PC-3 (cell line): ENCODE measurements at regions of chr6 and their contacts with region 1.

Region 1: GRCh38 chr6:1596088-1596852 is 13.4 kb upstream of the FOXC1 start:
- DNase-seq: peak; percentile 66
- ATAC-seq: peak; percentile 53
- H3K4me3 ChIP-seq: peak overlapping the region; percentile 34; the same call in 1 of the 2 replicates
- H3K27ac ChIP-seq: no peak overlapping the region
- H3K4me1 ChIP-seq: peaks cover 39% of the 10 kb centered on the region
- H3K27me3 ChIP-seq: peaks cover 20% of the 10 kb centered on the region
- CTCF ChIP-seq: peak; percentile 93

Region 2: GRCh38 chr6:414447-414846 is 1181.8 kb before region 1 on chr6:
- CTCF ChIA-PET with region 1: no interaction called
- POLR2A ChIA-PET with region 1: no interaction called
- intact Hi-C with region 1: no loop called
- DNase-seq: no peak
- ATAC-seq: no peak
- H3K4me3 ChIP-seq: no peak overlapping the region
- H3K27ac ChIP-seq: no peak overlapping the region
- H3K4me1 ChIP-seq: peaks cover 5% of the 10 kb centered on the region
- H3K27me3 ChIP-seq: peaks cover 28% of the 10 kb centered on the region
- CTCF ChIP-seq: no peak

Region 3: DNA sequence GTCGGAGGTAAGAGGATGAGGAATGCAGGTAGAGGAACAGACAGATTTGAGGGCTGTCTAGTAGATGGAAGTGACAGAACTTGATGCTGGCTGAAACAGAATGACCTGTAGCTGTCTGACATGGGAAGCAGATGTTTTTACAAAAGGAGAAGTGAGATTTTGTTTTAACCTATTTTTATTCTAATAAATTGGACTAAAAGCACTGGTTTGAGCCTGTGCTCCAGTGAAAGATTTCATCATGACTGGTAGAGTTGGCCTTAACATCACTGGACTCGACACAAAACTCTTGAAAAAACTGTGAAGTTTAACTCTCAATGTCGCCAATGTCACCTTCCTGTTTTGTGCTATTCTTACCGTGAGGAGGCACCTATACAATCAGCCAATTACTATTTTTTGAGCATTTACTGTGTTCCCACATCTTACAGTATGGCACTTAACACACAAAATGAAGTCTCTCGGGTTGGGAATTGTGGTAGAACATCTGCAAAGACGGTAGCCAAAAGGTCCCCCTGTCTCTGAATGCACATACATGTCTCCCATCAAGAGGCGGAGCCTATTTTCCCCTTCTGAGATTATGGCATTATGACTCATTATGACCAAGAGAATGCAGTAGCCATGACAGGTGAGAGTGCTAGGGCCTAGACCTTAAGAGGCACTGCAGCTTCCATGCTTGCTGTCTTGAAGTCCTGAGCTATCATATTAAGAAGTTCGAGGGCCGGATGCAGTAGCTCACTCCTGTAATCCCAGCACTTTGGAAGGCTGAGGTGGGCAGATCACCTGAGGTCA is 113.7 kb before region 1 on chr6:
- CTCF ChIA-PET with region 1: no interaction called
- POLR2A ChIA-PET with region 1: no interaction called
- intact Hi-C with region 1: no loop called
- DNase-seq: peak; percentile 69
- ATAC-seq: no peak
- H3K4me3 ChIP-seq: no peak overlapping the region
- H3K27ac ChIP-seq: no peak overlapping the region; the same call in 1 of the 2 replicates
- H3K4me1 ChIP-seq: peaks cover 41% of the 10 kb centered on the region
- H3K27me3 ChIP-seq: no peaks in the 10 kb centered on the region
- CTCF ChIP-seq: no peak

Region 4: GRCh38 chr6:2196079-2196679 is 599.9 kb after region 1 on chr6:
- CTCF ChIA-PET with region 1: no interaction called
- POLR2A ChIA-PET with region 1: no interaction called
- intact Hi-C with region 1: loop called (anchors 1 kb)
- DNase-seq: peak; percentile 76
- ATAC-seq: peak; percentile 43
- H3K4me3 ChIP-seq: no peak overlapping the region
- H3K27ac ChIP-seq: no peak overlapping the region; the same call in 1 of the 2 replicates
- H3K4me1 ChIP-seq: peaks cover 21% of the 10 kb centered on the region
- H3K27me3 ChIP-seq: no peaks in the 10 kb centered on the region
- CTCF ChIP-seq: peak; percentile 89

Region 5: DNA sequence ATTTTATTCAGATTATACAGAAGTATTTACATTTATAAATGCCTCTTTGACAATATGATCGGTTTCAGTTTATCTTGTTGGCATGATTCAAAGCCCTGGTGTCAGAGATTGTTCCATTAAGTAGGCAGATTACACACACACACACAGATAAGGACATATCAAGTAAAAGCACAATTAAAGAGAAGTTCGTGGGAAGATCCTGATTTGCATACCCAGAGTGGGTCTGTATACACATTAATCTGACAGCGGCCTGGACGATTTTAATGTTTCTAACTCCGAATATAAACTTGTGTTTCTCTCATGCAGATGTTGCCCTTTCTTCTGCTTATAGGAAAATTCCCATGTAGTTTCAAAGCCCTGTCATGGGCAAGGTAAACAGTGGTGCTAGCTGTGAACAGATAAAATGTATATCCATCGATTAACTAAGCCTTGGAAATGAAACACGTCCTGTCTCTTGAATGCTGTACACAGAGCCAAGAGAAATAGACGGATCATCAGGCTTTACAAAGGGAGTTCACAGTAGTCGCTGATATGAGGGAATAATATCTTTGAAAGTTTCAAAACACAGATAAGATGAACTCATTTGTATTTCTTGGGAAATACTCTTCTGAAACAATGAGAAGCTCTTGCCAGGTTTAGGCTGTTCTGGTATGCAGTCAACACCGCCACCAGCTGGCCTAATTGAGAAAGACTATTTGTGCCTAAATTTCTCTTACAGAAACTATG is 757.3 kb after region 1 on chr6:
- CTCF ChIA-PET with region 1: interaction called, 8 read pairs
- POLR2A ChIA-PET with region 1: no interaction called
- intact Hi-C with region 1: loop called (anchors 1 kb)
- DNase-seq: peak; percentile 90
- ATAC-seq: peak; percentile 61
- H3K4me3 ChIP-seq: no peak overlapping the region
- H3K27ac ChIP-seq: no peak overlapping the region
- H3K4me1 ChIP-seq: no peaks in the 10 kb centered on the region
- H3K27me3 ChIP-seq: no peaks in the 10 kb centered on the region
- CTCF ChIP-seq: peak; percentile 94

Region 6: DNA sequence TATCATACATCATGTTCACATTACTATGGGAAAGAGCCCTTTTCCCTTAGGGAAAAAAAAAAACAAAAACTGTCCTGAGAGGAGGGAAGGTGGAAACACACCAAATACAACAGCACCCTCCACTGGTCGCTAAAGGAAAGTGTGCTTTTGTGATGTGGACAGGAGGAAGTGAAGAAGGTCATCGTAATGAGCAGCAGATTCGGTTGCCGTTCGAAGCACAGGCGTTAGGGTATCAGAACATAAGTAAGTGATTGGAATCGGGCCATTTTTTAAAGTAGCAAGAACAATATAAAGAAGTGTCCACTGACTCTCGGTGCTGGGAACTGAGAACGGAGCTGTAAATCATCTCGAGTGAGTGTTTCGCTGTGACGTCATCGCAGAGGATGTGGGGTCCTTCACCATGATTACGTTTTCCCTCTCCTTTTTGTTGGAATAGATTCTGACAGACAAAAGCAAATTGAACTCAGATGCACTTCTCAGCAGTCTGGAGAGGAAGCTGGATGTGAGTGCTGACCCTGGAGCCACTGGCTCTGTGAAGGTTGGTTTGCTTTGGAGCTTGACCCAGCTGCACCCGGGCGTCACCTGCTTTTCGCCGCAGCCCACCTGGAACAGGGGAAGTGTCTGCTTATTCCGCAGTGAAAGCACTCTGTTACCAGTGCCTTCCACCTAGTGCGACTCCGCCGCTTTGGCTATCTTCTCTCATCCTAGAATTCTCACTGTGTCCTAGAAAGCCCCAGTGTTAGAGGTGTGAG is 852.7 kb after region 1 on chr6:
- CTCF ChIA-PET with region 1: no interaction called
- POLR2A ChIA-PET with region 1: no interaction called
- intact Hi-C with region 1: loop called (anchors 2 kb)
- DNase-seq: peak; percentile 85
- ATAC-seq: peak; percentile 68
- H3K4me3 ChIP-seq: peak overlapping the region; percentile 26; the same call in 1 of the 2 replicates
- H3K27ac ChIP-seq: no peak overlapping the region
- H3K4me1 ChIP-seq: peaks cover 20% of the 10 kb centered on the region
- H3K27me3 ChIP-seq: no peaks in the 10 kb centered on the region
- CTCF ChIP-seq: peak; percentile 89

Region 7: GRCh38 chr6:2558861-2559801 is 962.9 kb after region 1 on chr6:
- CTCF ChIA-PET with region 1: no interaction called
- POLR2A ChIA-PET with region 1: interaction called, 17 read pairs
- intact Hi-C with region 1: no loop called
- DNase-seq: no peak
- ATAC-seq: no peak
- H3K4me3 ChIP-seq: no peak overlapping the region
- H3K27ac ChIP-seq: no peak overlapping the region
- H3K4me1 ChIP-seq: peaks cover 23% of the 10 kb centered on the region
- H3K27me3 ChIP-seq: no peaks in the 10 kb centered on the region
- CTCF ChIP-seq: no peak

Region 8: DNA sequence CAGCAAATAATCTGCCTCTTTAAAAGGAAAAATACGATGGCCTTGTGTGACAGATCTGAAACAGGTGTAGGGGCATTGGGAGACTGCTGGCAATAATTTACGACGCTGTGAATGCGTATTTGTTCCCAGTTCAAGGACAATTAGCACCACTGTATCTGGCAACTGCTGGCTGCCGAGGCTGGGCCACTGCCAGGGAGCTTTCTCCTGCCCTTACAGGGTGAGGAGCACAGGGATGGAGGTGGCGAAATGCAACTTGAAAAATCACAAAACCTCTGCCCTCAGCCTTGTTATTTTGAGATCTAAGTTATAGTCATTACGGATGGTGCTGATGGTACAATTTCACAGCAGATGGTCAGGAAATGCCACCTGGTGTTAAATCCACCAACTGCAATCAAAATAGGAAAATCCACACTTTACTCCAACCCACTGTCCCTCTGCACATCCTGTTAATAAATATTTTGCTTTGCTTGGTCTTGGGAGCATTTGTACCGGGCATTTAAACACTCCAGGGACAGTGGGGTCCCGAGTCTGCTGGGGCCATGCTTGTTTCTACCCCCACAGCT is 1148.0 kb after region 1 on chr6:
- CTCF ChIA-PET with region 1: no interaction called
- POLR2A ChIA-PET with region 1: no interaction called
- intact Hi-C with region 1: loop called (anchors 2 kb)
- DNase-seq: peak; percentile 53
- ATAC-seq: peak; percentile 74
- H3K4me3 ChIP-seq: no peak overlapping the region
- H3K27ac ChIP-seq: no peak overlapping the region
- H3K4me1 ChIP-seq: peaks cover 5% of the 10 kb centered on the region; the same call in 1 of the 2 replicates
- H3K27me3 ChIP-seq: no peaks in the 10 kb centered on the region
- CTCF ChIP-seq: peak; percentile 64